AG04450 (cell line): ENCODE measurements at regions of chr7 and their contacts with region 1.

Region 1: DNA sequence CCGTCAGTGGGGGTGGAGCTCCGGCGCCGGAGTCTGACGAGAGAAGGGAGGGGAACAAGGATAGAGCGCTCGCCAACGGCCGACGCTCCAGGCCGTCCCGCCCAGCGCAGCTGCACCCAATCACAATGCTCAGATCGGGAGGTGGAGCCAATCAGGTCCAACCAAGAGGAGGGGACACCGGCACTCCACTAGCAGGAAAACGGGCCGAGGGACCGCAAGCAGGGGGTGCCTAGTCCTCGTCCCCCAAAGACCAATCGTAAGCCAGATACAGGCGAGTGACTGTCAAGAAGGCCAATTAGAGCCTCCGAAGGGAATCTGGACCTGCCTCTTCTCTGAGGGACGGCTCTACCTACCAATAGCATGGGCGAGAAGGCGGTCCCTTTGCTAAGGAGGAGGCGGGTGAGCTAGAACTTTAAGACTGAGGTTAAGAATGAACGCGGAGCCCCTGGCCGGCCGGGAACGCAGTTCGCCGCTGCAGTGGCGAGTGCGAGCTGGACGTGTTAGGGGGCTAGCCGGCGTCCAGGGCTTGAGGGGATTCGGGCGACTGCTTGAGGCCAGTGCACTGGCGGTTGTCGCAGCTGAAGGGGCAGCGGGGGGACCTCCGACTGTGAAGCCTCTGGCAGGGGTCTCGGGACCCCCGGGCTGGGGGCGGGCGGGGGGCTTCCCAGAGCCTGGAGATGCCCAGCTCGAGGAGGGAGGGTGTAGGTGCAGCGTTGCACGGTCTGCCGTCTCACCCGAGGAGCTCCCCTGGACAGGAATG is at the start of gene FBXO24:
- DNase-seq: peak; percentile 100
- H3K4me3 ChIP-seq: peak within 1 kb of the TSS; percentile 99
- H3K27ac ChIP-seq: peak within 1 kb of the TSS; percentile 87
- H3K27me3 ChIP-seq: no peaks in the 10 kb centered on the region
- CTCF ChIP-seq: no peak
- polyA plus RNA-seq, gene FBXO24: 0.29 and 0.33 TPM in 2 replicates

Region 2: DNA sequence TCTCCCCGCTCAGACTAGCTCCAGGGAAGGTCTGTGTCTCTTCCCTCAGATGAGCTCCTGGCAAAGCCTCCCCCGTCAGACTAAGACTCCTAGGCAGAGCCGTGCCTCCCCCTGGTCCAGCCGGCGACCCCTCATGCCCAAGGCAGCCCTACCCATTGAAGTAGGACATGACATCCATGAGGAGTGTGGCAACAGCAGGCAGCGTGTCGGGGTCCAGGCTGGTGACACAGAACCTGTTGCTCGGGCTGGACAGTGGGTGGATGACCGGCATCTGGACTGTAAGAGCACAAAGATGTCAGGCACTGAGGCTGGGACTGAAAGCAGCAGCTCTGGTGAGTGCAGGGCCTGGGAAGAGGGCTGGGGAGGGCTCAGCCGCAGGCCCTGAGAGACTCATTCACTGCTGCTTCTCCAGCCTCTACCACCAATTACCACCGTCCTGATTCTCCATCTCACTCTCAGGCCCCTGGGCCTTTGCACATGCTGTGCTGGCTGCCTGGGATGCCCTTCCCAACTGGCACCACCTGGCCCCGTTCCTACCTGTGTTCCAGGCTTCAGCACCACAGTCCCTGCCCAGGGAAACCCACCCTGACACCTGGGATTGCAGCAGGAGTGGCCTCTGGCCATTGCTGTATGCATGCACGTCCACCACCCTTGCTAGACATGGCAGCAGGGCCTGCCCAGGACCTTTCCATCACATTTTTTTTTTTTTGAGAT is 363.8 kb before region 1 on chr7:
- CTCF ChIA-PET with region 1: no interaction called
- POLR2A ChIA-PET with region 1: no interaction called
- DNase-seq: no peak
- H3K4me3 ChIP-seq: no peak overlapping the region
- H3K27ac ChIP-seq: no peak overlapping the region
- H3K27me3 ChIP-seq: no peaks in the 10 kb centered on the region
- CTCF ChIP-seq: no peak

Region 3: DNA sequence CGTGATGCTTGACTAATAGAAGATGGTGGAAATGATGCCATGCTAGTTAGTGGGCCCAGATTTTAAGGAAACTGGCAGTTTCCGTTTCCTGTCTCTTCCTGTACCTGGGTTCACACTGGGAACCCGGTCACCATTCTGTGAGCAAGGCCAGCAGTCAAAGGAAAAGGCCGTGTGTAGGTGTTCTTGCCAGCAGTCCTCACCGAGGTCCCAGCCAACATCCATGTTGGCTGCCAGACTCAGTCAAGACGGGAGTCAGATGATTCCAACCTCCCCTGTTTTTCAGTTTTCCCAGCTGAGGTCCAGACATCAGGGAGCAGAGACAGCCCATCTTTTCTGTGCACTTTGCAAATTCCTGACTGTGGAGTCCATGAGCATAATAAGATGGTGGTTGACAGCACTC is 243.7 kb before region 1 on chr7:
- CTCF ChIA-PET with region 1: no interaction called
- POLR2A ChIA-PET with region 1: no interaction called
- DNase-seq: no peak
- H3K4me3 ChIP-seq: no peak overlapping the region
- H3K27ac ChIP-seq: no peak overlapping the region
- H3K27me3 ChIP-seq: no peaks in the 10 kb centered on the region
- CTCF ChIP-seq: no peak

Region 4: DNA sequence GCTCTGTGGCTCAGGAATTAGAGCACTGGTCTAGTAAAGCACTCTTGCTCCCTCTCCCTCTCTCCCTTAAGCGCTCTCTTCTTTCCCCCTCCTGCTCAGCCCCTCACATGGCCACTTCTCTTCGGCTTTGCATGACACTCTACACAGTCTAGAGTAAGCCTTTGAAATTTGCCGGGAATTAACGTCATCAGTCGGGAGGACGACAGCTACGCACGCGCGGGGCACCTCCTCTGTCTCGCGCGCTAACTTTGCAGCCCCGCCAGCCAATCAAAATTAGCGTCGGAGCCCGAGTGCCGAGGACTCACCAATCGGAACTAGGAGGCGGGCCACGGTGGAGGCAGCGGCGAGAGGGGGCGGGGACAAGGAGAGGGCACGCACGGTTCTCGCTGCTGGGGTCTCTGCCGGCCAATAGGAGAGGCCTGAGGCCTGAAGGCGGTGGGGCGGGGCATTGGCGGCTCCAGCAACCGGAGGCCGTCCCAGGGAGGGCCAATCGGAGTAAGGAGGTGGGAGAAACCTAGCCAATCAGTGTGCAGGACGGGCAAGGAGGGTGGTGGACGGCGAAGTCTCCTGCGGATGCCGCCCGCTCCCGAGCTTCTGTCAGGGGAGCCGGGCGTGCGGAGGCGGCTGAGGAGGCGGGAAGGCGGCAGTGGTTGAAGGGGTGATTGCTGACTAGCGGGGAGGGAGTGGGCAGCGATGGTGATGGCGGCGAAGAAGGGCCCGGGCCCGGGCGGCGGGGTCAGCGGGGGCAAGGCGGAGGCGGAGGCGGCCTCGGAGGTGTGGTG is 47.6 kb before region 1 on chr7 and contains the start of gene AGFG2:
- CTCF ChIA-PET with region 1: interaction called, 3 read pairs
- POLR2A ChIA-PET with region 1: interaction called, 14 read pairs
- DNase-seq: peak; percentile 99
- H3K4me3 ChIP-seq: peak within 1 kb of the TSS; percentile 81
- H3K27ac ChIP-seq: peak within 1 kb of the TSS; percentile 31
- H3K27me3 ChIP-seq: peaks cover 6% of the 10 kb centered on the region
- CTCF ChIP-seq: no peak
- polyA plus RNA-seq, gene AGFG2: 5.7 and 6.4 TPM in 2 replicates

Region 5: DNA sequence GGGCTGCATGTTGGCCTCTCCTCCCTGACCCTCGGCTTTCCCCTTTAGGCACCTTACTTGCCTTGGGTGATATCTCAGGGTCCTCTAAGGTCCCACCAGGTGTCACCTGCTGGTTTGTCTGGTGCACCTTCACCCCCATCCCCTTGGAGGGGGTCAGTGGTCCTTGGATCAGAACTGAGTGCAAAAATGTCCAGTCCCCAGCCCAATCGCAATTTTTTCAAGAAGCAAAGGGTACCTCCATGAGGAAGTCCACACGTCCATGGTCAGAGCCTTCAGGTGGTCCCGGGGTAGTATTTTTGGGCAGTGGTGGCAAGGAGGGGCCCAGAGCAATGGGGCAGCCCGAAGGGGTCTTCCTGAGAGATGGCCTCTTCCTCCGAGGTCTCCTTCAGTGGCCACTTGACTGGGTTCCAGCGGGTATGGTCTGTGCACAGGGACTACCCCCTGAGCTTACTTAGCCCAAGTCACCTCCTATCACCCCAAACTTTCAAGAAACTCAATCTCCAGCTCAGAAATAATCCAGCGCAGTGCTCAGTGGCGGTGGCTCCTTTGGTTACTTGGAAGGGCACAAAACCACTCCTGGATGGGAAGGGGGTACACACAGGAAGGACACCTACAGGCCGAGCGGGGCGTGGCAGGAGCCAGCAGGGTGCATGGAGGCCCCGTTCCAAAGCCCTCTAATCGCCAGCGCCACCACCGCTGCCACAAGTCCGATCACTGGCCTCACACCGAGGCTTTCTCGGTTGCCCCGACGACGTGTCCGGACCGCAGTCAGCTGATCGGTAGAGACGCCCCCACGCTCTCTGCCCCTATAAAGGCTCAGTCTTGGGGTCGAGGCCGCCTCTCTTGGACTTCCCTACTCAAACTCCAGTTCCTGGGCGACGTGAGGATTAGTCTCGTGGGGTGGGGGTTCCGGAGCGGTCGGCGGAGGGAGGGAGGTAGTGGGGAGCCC is 17.3 kb before region 1 on chr7:
- CTCF ChIA-PET with region 1: interaction called, 25 read pairs
- POLR2A ChIA-PET with region 1: interaction called, 20 read pairs
- DNase-seq: no peak
- H3K4me3 ChIP-seq: peak overlapping the region; percentile 29; the same call in 1 of the 2 replicates
- H3K27ac ChIP-seq: no peak overlapping the region
- H3K27me3 ChIP-seq: peaks cover 2% of the 10 kb centered on the region
- CTCF ChIP-seq: peak; percentile 41

Region 6: DNA sequence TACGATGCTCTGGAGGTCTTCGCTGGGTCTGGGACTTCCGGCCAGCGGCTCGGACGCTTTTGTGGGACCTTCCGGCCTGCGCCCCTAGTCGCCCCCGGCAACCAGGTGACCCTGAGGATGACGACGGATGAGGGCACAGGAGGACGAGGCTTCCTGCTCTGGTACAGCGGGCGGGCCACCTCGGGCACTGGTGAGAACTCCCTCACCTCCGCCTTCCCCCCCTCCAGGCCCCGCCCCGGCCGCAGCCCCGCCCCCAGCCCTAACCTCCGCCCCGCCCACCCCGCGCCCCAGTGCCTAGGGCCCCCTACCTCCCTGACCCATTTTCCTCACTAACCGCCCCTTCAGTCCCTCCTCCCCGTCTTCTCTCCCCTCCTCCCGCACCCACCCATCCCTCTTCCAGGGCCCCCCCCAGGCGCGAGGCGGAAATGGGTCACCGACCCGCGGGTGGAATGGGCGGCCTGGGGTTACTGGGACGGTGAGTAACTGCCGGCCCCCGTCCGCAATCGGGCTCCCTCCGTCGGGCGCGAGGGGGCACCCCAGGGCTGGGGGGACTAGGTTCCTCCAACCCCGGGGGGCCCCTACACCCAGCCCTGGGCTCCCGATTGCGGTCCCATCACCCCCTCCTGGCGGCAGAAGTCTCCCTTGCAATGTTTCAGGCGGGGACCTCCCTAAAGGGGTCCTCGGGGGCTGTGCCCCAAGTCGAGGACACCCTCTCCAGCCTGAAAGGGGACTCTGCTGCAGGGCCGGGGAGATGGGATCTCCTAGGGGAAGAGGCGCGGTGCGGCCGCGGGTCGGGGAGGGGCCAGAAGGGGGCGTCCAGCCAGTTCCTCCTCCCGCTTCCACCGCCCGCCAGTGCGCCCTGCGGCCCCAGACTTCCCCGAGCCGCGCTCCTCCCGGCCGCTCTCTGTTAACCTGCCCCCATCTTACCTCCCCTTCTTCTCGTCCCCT is 17.9 kb after region 1 on chr7:
- CTCF ChIA-PET with region 1: interaction called, 7 read pairs
- POLR2A ChIA-PET with region 1: interaction called, 68 read pairs
- DNase-seq: no peak
- H3K4me3 ChIP-seq: peak overlapping the region; percentile 94
- H3K27ac ChIP-seq: peak overlapping the region; percentile 77
- H3K27me3 ChIP-seq: no peaks in the 10 kb centered on the region
- CTCF ChIP-seq: peak; percentile 46

Region 7: GRCh38 chr7:100655908-100656674 is 69.6 kb after region 1 on chr7 and contains the start of gene ACTL6B:
- CTCF ChIA-PET with region 1: no interaction called
- POLR2A ChIA-PET with region 1: no interaction called
- DNase-seq: no peak
- H3K4me3 ChIP-seq: no peak within 1 kb of the TSS
- H3K27ac ChIP-seq: no peak within 1 kb of the TSS
- H3K27me3 ChIP-seq: peaks cover 23% of the 10 kb centered on the region
- CTCF ChIP-seq: no peak
- polyA plus RNA-seq, gene ACTL6B: not detected in 2 replicates

Region 8: DNA sequence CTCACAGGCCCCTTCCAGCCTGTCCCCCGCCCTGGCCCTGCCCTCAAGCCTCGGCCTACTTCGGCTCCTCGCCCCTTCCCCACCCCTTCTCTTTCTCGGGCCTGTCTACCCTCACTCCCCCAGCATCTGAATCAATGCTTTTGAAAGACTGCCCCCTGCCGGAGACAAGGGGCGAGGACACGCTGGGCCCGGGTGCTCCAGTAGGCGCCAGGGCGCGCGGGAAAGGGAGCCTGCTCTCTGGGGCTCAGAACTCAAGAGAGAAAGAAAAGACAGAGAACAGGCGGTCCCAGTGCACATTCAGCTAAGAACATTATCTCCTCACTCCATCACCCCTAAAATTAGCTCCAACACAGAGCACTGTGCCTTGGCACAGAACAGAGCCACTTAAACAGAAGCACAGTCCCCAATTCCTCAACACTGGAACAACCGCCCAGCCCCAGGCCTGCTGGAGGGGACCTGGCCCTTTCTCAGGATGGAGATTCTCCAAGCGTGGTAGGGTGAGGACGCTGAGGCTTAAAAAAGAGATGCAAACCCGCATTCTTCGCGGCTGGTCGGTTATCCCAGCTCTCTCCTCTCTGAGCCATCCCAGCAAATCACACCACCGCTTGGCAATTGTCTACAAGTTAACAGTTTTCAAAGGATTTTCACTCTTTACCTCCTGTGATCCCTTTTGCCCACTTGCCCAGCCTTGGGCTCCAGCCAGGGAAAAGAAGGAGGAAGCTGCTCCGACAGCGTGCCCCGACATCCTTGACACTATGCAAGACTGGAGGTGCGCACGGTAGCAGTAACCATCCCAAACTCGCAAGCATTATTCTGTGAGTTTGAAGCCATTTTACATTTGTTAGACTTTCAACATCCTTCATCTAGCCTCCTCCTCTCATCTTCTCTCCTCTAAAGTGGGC is 105.5 kb after region 1 on chr7:
- CTCF ChIA-PET with region 1: interaction called, 20 read pairs
- POLR2A ChIA-PET with region 1: interaction called, 5 read pairs
- DNase-seq: no peak
- H3K4me3 ChIP-seq: peak overlapping the region; percentile 80
- H3K27ac ChIP-seq: no peak overlapping the region
- H3K27me3 ChIP-seq: peaks cover 2% of the 10 kb centered on the region
- CTCF ChIP-seq: peak; percentile 90

Region 9: DNA sequence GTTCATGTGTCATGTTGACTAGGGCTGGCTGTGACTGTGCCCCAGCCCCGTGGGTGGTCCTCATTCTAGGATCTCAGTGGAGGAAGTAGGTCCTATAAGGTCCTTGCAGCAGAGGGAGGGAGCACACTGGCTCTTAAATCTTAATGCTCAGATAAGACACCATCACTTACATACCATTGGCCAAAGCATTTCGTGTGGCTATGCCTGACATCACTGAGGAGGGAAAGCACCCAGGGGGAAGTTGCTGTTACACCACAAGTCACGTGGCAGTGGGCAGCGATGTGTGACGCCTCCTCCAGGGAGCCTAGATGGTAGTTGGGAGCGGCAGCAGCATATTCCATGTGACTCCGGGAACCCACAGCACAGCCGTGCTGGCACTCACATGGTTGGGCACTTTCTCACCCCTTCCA is 1475.5 kb after region 1 on chr7:
- CTCF ChIA-PET with region 1: no interaction called
- POLR2A ChIA-PET with region 1: no interaction called
- DNase-seq: no peak
- H3K4me3 ChIP-seq: no peak overlapping the region
- H3K27ac ChIP-seq: no peak overlapping the region
- H3K27me3 ChIP-seq: no peaks in the 10 kb centered on the region
- CTCF ChIP-seq: no peak